CD8-positive, alpha-beta T cell (primary cell): ENCODE measurements at regions of chr1 and their contacts with region 1.

Region 1: DNA sequence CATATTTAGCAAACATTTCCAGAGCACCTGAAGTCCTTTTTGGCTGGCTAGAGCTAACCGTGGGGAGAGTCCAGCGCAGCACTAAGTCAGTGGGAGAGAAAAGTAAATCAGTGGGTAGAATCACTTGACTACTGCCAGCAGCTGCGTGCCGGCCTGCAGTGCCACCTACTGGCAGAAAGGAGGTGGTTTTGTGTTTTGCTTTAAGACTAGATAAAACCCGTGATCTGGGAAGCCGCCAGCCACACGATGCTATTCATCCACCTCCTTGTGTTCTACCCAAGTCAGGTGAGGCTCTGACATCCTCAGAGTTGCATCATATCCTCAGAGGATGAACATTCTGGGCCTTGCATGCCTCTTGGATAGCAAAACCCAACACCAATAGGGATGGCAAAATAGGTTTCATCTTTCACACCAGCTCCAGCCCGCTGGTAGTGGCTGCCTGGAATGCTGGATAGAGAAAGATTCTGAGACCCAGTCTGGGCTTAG is 14.1 kb upstream of the HEYL start:
- DNase-seq: peak; percentile 55 to 81 (median 73)
- ATAC-seq: peak; percentile 78
- H3K4me3 ChIP-seq: no peak overlapping the region
- H3K4me3 Mint-ChIP-seq: no peak overlapping the region
- H3K27ac ChIP-seq: no peak overlapping the region
- H3K27ac Mint-ChIP-seq: no peak overlapping the region
- H3K4me1 ChIP-seq: no peaks in the 10 kb centered on the region
- H3K4me1 Mint-ChIP-seq: peaks cover 6% of the 10 kb centered on the region
- H3K27me3 ChIP-seq: no peaks in the 10 kb centered on the region
- H3K27me3 Mint-ChIP-seq: peaks cover 6% of the 10 kb centered on the region
- CTCF ChIP-seq: peak; percentile 90

Region 2: DNA sequence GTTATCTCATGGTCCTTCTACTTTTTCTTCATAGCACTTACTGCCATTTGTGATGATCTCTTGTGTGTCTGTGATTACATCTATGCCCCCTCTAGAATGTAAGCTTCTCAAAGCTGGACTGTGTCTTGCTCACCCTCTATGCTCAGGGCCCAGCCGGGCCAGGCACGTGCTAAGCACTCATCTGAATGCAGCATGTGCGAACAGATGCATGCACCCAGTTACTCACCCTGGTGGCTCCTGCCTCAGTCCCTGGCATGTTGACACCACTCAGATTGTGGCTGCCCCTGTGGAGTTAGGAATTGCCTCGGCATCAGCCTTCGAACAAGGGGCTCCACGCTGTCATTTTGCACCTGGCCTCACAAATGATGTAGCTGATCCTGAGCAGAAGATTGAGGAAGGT is 57.4 kb before region 1 on chr1:
- CTCF ChIA-PET with region 1: interaction called, 11 read pairs
- POLR2A ChIA-PET with region 1: no interaction called
- intact Hi-C with region 1: no loop called
- DNase-seq: no peak
- ATAC-seq: no peak
- H3K4me3 ChIP-seq: no peak overlapping the region
- H3K4me3 Mint-ChIP-seq: no peak overlapping the region
- H3K27ac ChIP-seq: no peak overlapping the region
- H3K27ac Mint-ChIP-seq: no peak overlapping the region
- H3K4me1 ChIP-seq: no peaks in the 10 kb centered on the region
- H3K4me1 Mint-ChIP-seq: no peaks in the 10 kb centered on the region
- H3K27me3 ChIP-seq: no peaks in the 10 kb centered on the region
- H3K27me3 Mint-ChIP-seq: peaks cover 18% of the 10 kb centered on the region
- CTCF ChIP-seq: no peak

Region 3: DNA sequence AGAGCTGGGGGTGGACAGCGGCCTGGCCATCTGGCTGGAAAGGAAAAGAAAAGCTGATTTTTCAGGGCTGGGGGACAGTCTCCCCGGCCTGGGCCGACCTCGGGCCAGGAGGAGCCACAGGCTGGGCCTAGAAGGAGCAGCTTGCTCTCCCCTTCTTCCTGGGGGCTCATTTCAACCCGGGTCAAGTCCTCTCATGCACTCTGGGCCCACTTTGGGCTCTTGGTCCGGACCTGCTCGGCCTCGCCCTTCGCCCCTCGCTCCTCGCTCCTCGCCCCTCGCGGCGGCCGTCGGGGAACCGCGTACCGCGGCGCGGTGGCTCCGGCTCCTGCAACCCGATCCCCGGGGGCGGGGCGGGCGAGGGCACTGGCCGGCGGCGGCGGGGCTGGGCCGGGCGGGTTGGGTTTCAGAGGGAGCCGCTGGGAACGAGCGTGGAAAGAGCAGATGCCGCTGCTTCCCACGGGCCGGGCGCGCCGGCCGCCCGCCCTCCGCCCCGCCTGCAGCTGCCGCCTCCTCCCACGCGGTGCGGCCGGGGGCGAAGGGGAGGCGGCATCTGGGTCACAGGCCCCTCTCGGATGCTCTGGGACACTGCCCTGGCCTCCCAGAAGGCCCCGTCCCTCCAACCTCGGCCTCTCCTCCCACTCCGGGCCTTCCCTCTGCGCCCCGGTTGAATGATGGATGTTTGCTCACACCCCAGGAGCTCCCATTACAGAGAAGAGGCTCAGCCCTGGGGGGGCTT is 20.7 kb before region 1 on chr1:
- CTCF ChIA-PET with region 1: interaction called, 19 read pairs
- POLR2A ChIA-PET with region 1: no interaction called
- intact Hi-C with region 1: no loop called
- DNase-seq: no peak
- ATAC-seq: no peak
- H3K4me3 ChIP-seq: no peak overlapping the region
- H3K4me3 Mint-ChIP-seq: no peak overlapping the region
- H3K27ac ChIP-seq: no peak overlapping the region
- H3K27ac Mint-ChIP-seq: no peak overlapping the region
- H3K4me1 ChIP-seq: no peaks in the 10 kb centered on the region
- H3K4me1 Mint-ChIP-seq: no peaks in the 10 kb centered on the region
- H3K27me3 ChIP-seq: peaks cover 0 to 3% of the 10 kb centered on the region in 2 experiments
- H3K27me3 Mint-ChIP-seq: peaks cover 38% of the 10 kb centered on the region
- CTCF ChIP-seq: no peak

Region 4: GRCh38 chr1:39672551-39672947 is 19.0 kb after region 1 on chr1:
- CTCF ChIA-PET with region 1: interaction called, 100 read pairs
- POLR2A ChIA-PET with region 1: no interaction called
- intact Hi-C with region 1: no loop called
- DNase-seq: peak in 6 of 9 experiments; percentile 7 to 70 (median 50)
- ATAC-seq: peak; percentile 45
- H3K4me3 ChIP-seq: peak overlapping the region in 1 of 2 experiments; percentile 48
- H3K4me3 Mint-ChIP-seq: peak overlapping the region; percentile 74
- H3K27ac ChIP-seq: no peak overlapping the region
- H3K27ac Mint-ChIP-seq: no peak overlapping the region
- H3K4me1 ChIP-seq: peaks cover 17% of the 10 kb centered on the region
- H3K4me1 Mint-ChIP-seq: peaks cover 9% of the 10 kb centered on the region
- H3K27me3 ChIP-seq: peaks cover 10 to 15% of the 10 kb centered on the region in 2 experiments
- H3K27me3 Mint-ChIP-seq: peaks cover 29% of the 10 kb centered on the region
- CTCF ChIP-seq: peak; percentile 38

Region 5: GRCh38 chr1:39711104-39711965 is 57.7 kb after region 1 on chr1:
- CTCF ChIA-PET with region 1: interaction called, 11 read pairs
- POLR2A ChIA-PET with region 1: no interaction called
- intact Hi-C with region 1: no loop called
- DNase-seq: no peak
- ATAC-seq: no peak
- H3K4me3 ChIP-seq: no peak overlapping the region
- H3K4me3 Mint-ChIP-seq: no peak overlapping the region
- H3K27ac ChIP-seq: no peak overlapping the region
- H3K27ac Mint-ChIP-seq: no peak overlapping the region
- H3K4me1 ChIP-seq: no peaks in the 10 kb centered on the region
- H3K4me1 Mint-ChIP-seq: no peaks in the 10 kb centered on the region
- H3K27me3 ChIP-seq: no peaks in the 10 kb centered on the region
- H3K27me3 Mint-ChIP-seq: peaks cover 22% of the 10 kb centered on the region
- CTCF ChIP-seq: no peak